Ascending aorta (tissue), 2 donors: ENCODE measurements at regions of chr3 and their contacts with region 1.

Region 1: DNA sequence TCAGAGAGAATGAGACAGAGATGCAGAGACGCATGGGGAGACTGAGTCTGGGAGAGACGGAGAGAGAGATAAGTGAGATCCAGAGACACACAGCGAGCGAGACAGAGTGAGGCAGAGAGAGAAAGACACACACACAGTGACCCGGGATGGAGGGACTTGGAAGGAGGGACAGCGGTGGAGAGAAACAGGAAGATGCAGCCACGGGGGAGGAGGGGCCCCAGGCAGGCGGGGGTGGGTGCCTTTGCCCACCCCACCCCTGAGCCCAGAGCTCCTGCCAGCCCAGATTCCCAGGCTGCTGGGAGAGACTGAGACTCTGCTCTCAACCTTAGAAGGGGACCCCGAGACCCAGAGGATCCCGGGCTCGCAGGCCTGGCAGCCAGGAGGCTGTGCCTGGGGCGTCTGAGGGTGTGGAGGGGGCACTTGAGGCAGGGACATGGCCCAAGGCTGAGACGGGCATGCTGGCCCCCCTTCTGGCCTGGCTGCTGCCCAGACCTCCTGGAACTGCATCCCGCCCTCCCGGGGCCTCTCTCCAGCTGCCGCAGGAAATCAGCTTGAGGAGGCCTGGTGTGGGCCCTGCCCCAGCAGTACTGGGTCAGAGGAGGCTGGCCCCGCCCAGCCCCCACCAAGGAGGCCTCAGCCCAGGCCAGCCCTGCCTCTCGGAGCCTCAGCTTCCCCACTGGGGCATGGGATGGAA is 18.1 kb downstream of the H1-8 start:
- DNase-seq: peak; percentile 69 to 93
- H3K4me3 ChIP-seq: peak overlapping the region; percentile 6 to 57
- H3K27ac ChIP-seq: peak overlapping the region; percentile 91 to 93
- H3K4me1 ChIP-seq: peaks cover 29 to 64% of the 10 kb centered on the region in 2 donors
- H3K27me3 ChIP-seq: no peaks in the 10 kb centered on the region
- CTCF ChIP-seq: no peak

Region 2: DNA sequence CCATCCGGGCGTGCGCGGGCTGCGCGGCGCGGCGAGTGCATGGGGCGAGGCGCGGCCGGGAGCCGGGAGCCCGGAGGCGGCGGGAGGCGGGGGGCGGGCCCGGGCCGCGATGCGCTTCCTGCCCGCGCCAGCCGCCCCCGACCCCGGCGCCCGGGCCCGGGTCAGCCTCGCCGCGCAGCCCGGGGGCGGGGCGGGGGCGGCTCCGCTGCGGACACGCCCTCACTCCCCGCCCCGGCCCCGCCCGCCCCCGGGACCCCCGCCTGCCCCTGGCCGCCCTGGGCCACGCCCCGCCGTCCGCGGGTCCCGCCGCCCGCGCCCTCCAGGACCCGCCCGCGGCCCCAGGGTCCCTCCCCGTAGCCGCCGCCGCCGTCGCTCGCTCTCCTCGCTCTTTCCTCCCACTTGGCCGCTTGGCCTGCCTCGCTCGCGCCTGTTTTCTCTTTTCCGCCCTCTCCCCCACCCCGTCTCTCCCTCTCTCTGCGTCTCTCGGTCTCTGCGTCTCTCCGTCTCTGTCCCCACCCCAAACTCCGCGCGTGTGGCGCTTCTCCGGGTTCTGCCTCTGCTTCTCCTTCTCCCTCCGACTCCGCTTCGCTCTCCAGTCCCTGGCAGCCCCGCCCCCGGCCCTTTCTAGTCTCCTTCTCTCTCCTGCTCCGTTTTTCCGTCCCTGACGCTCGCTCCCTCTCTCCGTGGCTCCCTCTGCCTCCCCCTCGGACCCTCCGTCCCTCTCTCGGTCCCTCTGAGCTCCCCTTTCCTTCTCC is 45.8 kb after region 1 on chr3 and contains the start of gene PLXND1:
- intact Hi-C with region 1: loop called (anchors 2 kb)
- DNase-seq: peak in 1 of 2 donors; percentile 87
- H3K4me3 ChIP-seq: peak within 1 kb of the TSS; percentile 84 to 90
- H3K27ac ChIP-seq: peak within 1 kb of the TSS; percentile 94
- H3K4me1 ChIP-seq: peaks cover 28 to 62% of the 10 kb centered on the region in 2 donors
- H3K27me3 ChIP-seq: no peaks in the 10 kb centered on the region
- CTCF ChIP-seq: no peak
- total RNA-seq, gene PLXND1: 407 TPM